Mucosa of descending colon (tissue), 3 donors: ENCODE measurements at regions of chr10 and their contacts with region 1.

Region 1: DNA sequence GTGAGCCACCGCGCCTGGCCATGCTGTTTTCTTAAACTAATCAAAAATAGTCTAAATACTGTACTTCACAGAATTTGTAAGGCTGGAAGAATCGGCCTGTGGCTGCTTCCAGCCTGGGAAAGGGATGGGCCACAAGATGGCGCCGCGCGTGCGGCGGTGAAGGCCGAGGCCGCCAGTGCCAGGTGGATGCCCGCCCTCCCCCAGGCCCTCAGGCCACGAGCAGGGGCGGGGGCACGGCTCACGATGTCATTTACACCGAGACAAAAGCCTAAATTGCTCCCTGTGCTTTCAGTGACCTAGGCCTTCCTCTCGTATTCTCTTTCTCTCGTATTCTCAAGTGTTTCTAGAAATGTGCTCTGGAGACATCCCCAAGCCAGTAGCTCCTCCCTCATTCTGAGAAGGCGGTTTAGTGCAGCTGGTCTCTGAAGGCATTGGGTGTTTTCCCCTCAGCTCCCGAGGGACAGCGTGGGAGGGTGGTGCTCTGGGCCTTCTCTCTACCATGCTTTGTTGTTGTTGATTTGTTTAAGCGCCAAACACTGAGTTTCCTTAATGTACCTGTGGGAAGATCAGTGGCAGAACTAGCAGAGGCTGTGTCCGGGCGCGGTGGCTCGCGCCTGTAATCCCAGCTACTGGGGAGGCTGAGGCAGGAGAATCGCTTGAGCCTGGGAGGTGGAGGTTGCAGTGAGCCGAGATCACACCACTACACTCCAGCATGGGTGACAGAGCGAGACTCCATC is 68.4 kb downstream of the CDC123 start:
- DNase-seq: peak; percentile 87 to 91 (median 89)
- ATAC-seq: peak; percentile 89
- H3K4me3 ChIP-seq: no peak overlapping the region
- H3K4me1 ChIP-seq: peaks cover 14% of the 10 kb centered on the region
- CTCF ChIP-seq: peak; percentile 68

Region 2: DNA sequence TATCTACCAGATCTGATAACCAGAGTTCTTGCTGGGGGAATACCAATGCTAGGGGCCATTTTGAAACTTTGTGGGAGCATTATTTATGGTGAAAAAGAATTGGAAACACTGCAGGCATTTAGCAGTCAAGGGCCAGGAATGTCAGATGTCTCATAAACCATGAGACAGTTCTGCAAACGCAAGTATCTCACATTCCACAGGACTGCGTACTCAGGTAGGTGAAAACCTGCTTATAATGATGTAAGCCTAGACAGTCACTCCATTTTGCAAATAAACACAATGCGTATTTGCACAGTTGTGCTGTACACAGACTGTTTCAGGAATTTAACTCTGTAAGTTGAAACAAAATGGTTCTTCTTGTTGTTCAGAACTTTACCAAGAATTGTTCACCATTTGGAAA is 488.3 kb before region 1 on chr10:
- intact Hi-C with region 1: no loop called
- DNase-seq: no peak
- ATAC-seq: no peak
- H3K4me3 ChIP-seq: no peak overlapping the region
- H3K4me1 ChIP-seq: no peaks in the 10 kb centered on the region
- CTCF ChIP-seq: no peak

Region 3: DNA sequence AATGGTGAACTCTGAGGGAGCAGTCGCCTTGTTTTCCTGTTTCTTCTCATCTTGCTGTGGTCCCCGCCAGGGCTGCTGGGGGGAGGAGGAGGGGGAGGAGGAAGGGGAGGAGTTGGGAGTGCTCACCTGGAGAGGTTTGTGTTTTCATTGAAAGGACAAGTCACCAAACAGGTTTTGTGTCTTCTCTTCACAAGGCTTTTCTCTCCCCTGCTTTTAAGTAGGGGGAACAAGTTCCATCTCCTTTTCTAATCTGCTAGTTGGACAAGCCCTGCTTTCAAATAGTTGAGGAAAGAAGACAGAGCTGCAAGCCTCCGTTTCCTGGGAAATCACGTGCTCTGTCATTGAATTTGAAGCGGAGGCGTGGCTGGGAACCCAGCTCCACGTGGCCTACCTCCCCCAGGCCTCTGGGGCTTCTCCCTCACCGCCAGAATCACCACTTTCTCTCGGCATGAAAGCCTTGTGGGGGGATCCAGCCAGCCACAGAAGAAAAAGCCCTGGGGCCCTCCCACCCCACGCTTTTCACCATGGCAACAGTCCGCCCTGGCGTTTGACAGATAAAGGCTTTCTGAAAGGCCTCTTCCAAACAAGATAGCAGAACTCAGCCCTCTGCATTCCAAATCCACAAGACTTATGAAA is 389.7 kb before region 1 on chr10:
- intact Hi-C with region 1: no loop called
- DNase-seq: peak in 1 of 3 donors; percentile 35
- ATAC-seq: peak; percentile 19
- H3K4me3 ChIP-seq: no peak overlapping the region
- H3K4me1 ChIP-seq: peaks cover 18% of the 10 kb centered on the region
- CTCF ChIP-seq: no peak

Region 4: DNA sequence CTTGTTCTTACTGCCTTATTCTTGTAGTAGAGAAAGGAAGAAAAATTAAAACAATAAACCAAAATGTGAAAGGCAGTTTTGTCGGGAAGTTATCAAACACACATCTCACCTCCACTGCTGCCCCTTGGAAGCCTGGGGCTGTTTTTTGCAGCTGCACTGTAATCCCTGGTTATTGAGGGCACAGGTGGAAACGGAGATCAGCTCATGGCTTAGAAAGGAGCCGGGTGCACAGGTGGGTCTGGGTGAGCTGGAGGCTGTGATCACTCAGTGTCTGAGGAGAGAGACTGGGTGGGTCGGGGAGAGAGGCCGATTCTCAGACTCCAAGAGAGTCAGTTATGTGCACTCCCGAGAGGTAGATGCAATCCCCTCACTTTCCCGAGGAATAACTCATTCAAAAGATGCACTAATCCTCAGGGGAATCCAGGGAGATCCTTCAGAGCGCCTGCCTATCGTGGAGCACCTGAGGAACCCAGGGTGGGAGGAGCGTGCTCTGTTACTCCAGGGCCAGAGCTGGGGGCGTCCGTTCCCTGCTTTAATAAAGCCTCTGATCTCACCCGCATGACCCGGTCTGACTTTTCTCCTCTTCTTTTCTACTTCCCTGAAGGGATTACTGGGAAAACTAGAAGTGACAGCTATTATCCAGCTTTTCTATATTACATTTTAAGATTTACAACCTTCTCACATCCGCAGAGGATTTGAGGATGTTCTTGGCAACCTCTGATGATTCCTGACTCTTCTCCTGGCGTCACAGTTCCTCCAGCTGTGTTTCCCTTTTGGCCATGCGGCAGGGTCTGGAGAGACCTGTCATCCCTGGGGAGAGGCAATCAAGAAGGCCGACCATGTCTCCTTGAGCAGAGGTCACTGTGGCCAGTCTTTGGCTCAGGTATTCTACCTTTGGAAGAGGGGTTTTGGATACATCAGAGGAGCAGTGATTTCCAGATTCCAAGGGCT is 167.1 kb after region 1 on chr10:
- intact Hi-C with region 1: no loop called
- DNase-seq: no peak
- ATAC-seq: no peak
- H3K4me3 ChIP-seq: no peak overlapping the region
- H3K4me1 ChIP-seq: peaks cover 15% of the 10 kb centered on the region
- CTCF ChIP-seq: no peak

Region 5: GRCh38 chr10:12656518-12657142 is 392.3 kb after region 1 on chr10:
- intact Hi-C with region 1: loop called (anchors 5 to 10 kb)
- DNase-seq: no peak
- ATAC-seq: peak; percentile 84
- H3K4me3 ChIP-seq: no peak overlapping the region
- H3K4me1 ChIP-seq: no peaks in the 10 kb centered on the region
- CTCF ChIP-seq: peak; percentile 49

Region 6: GRCh38 chr10:12710594-12711349 is 446.4 kb after region 1 on chr10:
- intact Hi-C with region 1: loop called (anchors 5 kb)
- DNase-seq: peak; percentile 64 to 86 (median 82)
- ATAC-seq: peak; percentile 85
- H3K4me3 ChIP-seq: no peak overlapping the region
- H3K4me1 ChIP-seq: peaks cover 8% of the 10 kb centered on the region
- CTCF ChIP-seq: peak; percentile 89